Activated CD4-positive, alpha-beta memory T cell treated with anti-CD3 and anti-CD28 coated beads for 36 hours (primary cell): ENCODE measurements at regions of chr15 and their contacts with region 1.

Region 1: DNA sequence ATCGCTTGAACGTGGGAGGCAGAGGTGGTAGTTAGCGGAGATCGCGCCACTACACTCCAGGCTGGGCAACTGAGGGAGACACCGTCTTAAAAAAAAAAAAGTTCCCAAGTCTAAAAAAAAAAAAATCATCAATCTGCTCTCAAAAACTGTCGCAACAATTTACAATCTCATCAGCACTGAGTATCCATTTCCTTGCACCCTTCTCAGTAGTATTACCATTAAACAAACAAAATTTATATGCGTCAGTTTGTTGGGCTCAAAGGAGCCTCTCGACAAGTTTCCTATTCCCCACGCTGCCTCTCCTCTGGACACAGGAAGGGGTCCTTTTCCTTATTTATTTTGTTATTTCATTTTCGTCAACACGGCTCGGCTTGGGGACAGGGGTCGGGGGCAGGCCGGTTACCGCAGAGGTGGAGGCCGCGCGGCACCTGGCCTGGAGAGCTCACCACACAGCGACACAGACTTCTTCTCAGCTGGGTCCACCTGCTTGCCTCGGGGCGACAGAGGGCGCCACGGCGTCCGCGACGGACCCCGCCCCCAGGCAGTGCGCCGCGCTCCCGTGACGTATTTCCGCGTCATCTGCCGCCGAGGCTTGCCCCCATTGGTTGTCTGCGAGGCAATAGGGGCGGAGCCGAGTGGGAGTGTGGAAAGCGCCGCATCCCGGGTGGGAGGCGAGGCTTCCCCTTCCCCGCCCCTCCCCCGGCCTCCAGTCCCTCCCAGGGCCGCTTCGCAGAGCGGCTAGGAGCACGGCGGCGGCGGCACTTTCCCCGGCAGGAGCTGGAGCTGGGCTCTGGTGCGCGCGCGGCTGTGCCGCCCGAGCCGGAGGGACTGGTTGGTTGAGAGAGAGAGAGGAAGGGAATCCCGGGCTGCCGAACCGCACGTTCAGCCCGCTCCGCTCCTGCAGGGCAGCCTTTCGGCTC is at the start of gene MAP2K1:
- DNase-seq: peak; percentile 99
- H3K4me3 Mint-ChIP-seq: peak within 1 kb of the TSS; percentile 95
- H3K27ac Mint-ChIP-seq: peak within 1 kb of the TSS; percentile 92
- H3K4me1 Mint-ChIP-seq: peaks cover 52% of the 10 kb centered on the region
- H3K27me3 Mint-ChIP-seq: no peaks in the 10 kb centered on the region
- total RNA-seq, gene MAP2K1: 91.8 to 91.9 TPM

Region 2: GRCh38 chr15:66188464-66188863 is 198.0 kb before region 1 on chr15:
- CTCF ChIA-PET with region 1: no interaction called
- POLR2A ChIA-PET with region 1: no interaction called
- intact Hi-C with region 1: no loop called
- DNase-seq: no peak
- H3K4me3 Mint-ChIP-seq: no peak overlapping the region
- H3K27ac Mint-ChIP-seq: no peak overlapping the region
- H3K4me1 Mint-ChIP-seq: no peaks in the 10 kb centered on the region
- H3K27me3 Mint-ChIP-seq: peaks cover 14% of the 10 kb centered on the region

Region 3: GRCh38 chr15:66369773-66370651 is 16.5 kb before region 1 on chr15:
- CTCF ChIA-PET with region 1: interaction called, 7 read pairs
- POLR2A ChIA-PET with region 1: interaction called, 11 read pairs
- intact Hi-C with region 1: loop called (anchors 1 kb)
- DNase-seq: peak; percentile 66
- H3K4me3 Mint-ChIP-seq: peak overlapping the region; percentile 69
- H3K27ac Mint-ChIP-seq: peak overlapping the region; percentile 98
- H3K4me1 Mint-ChIP-seq: peaks cover 15% of the 10 kb centered on the region
- H3K27me3 Mint-ChIP-seq: no peaks in the 10 kb centered on the region

Region 4: GRCh38 chr15:66456211-66456610 is 69.7 kb after region 1 on chr15:
- CTCF ChIA-PET with region 1: interaction called, 4 read pairs
- POLR2A ChIA-PET with region 1: interaction called, 3 read pairs
- intact Hi-C with region 1: loop called (anchors 2 kb)
- DNase-seq: peak; percentile 55
- H3K4me3 Mint-ChIP-seq: no peak overlapping the region
- H3K27ac Mint-ChIP-seq: no peak overlapping the region
- H3K4me1 Mint-ChIP-seq: peaks cover 18% of the 10 kb centered on the region
- H3K27me3 Mint-ChIP-seq: no peaks in the 10 kb centered on the region

Region 5: GRCh38 chr15:66497502-66498455 is 111.3 kb after region 1 on chr15 and contains the start of gene SNAPC5:
- CTCF ChIA-PET with region 1: interaction called, 74 read pairs
- POLR2A ChIA-PET with region 1: interaction called, 48 read pairs
- intact Hi-C with region 1: loop called (anchors 1 kb)
- DNase-seq: peak; percentile 99
- H3K4me3 Mint-ChIP-seq: peak within 1 kb of the TSS; percentile 88
- H3K27ac Mint-ChIP-seq: peak within 1 kb of the TSS; percentile 92
- H3K4me1 Mint-ChIP-seq: peaks cover 63% of the 10 kb centered on the region
- H3K27me3 Mint-ChIP-seq: no peaks in the 10 kb centered on the region
- total RNA-seq, gene SNAPC5: 23.4 to 25.3 TPM